CD8-positive, alpha-beta T cell (primary cell): ENCODE measurements at regions of chr16 and their contacts with region 1.

Region 1: GRCh38 chr16:89171463-89172170 is at the start of gene CDH15:
- DNase-seq: peak; percentile 83 to 98 (median 91)
- ATAC-seq: peak; percentile 96
- H3K4me3 ChIP-seq: peak within 1 kb of the TSS; percentile 35 to 50
- H3K4me3 Mint-ChIP-seq: peak within 1 kb of the TSS; percentile 69
- H3K27ac ChIP-seq: no peak within 1 kb of the TSS
- H3K27ac Mint-ChIP-seq: no peak within 1 kb of the TSS
- H3K4me1 ChIP-seq: peaks cover 29% of the 10 kb centered on the region
- H3K4me1 Mint-ChIP-seq: peaks cover 6% of the 10 kb centered on the region
- H3K27me3 ChIP-seq: peaks cover 0 to 2% of the 10 kb centered on the region in 2 experiments
- H3K27me3 Mint-ChIP-seq: no peaks in the 10 kb centered on the region
- CTCF ChIP-seq: no peak
- total RNA-seq, gene CDH15: 0.24 TPM in 1 of 2 experiments, not detected in the other

Region 2: DNA sequence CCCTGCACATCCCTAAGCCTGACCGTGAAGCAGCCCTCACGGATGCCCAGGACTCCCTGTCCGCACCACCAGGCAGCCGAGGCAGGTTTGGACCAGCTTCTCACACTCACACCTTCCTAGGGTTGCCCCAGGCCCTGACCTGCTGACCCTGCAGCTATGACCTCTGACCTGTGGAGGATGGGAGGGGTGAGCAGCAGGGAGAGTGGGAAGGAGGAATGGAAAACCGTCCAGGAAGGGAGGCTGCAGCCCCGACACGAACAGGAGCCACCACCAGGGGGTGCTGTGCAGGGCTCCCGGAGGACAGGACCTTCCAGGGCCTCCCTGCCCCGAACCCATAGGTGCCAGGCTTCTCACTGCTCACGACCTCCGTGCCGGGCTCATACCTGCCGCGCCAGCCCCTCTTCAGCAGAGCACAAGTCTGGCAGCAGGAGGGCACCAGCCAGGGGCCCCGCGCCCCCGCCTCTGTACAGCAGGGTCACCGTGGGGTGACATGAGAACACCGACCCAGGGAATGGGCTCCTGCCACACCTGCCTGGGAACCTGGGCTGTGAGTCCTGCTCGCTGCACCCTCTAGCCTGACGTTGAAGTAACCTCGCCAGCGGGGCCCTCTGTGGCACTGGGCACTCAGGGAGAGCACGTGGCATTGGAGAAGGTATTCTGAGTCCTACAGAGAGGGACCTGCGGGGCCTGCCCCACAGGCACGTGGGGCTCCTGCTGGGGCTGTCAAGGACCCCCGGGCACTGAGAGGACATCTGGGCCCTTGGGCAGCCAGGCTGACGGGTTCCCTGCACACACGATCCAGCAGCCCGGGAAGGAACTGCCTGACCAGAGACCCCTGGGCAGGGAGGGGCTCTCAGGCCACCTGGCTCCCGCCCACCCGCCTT is 427.7 kb before region 1 on chr16:
- CTCF ChIA-PET with region 1: interaction called, 3 read pairs
- POLR2A ChIA-PET with region 1: no interaction called
- intact Hi-C with region 1: loop called in 1 of 2 experiments (anchors 1 kb)
- DNase-seq: peak; percentile 43 to 88 (median 77)
- ATAC-seq: peak; percentile 64
- H3K4me3 ChIP-seq: no peak overlapping the region
- H3K4me3 Mint-ChIP-seq: no peak overlapping the region
- H3K27ac ChIP-seq: no peak overlapping the region
- H3K27ac Mint-ChIP-seq: no peak overlapping the region
- H3K4me1 ChIP-seq: peaks cover 33% of the 10 kb centered on the region
- H3K4me1 Mint-ChIP-seq: peaks cover 25% of the 10 kb centered on the region
- H3K27me3 ChIP-seq: no peaks in the 10 kb centered on the region
- H3K27me3 Mint-ChIP-seq: no peaks in the 10 kb centered on the region
- CTCF ChIP-seq: peak; percentile 89

Region 3: DNA sequence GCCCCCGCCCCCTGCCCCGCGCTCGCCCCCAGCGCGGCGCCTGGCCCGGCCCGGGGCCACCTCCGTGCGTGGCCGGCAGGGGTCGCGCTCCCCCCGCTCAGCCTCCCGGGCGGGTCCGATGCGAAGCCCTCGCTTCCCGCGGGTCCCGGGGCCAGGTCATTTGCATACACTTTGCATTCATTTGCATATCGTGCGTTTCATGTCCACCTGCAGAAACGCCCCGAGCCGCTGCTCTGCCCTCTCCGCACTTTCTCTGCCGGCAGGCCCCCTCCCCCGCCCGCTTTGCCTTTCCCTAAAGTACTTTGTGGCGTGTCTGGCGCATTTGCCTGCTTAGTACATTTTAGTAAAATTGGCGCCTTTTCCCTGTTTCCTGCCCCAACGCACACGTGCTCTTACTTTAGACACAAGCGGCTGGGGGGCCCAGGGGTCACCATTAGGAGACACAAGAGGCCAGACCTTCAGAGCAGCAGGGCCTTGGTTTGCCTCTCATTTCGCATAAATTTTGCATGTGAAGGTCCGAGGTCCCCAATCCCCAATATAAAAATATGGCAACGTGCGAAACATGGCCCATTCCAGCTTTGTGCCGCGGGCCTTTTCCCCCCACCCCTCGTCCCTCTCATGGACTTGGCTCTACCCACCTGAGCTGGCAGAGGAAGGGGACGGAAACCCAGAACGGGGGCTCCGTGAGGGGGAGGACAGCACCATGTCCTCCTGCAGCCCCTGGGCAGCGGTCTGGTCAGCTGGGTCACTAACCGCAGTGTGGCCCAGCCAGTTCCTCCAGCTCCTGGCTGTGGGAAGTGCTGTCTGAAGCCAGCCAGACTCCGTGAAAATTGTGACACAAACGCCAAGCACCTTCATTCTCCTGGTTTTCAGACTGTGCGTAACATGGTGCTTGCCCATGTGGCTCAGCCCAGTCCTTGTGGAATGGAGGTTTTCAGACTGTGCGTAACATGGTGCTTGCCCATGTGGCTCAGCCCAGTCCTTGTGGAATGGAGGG is 229.4 kb before region 1 on chr16:
- CTCF ChIA-PET with region 1: interaction called, 40 read pairs
- POLR2A ChIA-PET with region 1: interaction called, 3 read pairs
- intact Hi-C with region 1: loop called (anchors 1 kb)
- DNase-seq: peak; percentile 26 to 77 (median 59)
- ATAC-seq: peak; percentile 76
- H3K4me3 ChIP-seq: no peak overlapping the region
- H3K4me3 Mint-ChIP-seq: peak overlapping the region; percentile 54
- H3K27ac ChIP-seq: no peak overlapping the region
- H3K27ac Mint-ChIP-seq: no peak overlapping the region
- H3K4me1 ChIP-seq: peaks cover 21% of the 10 kb centered on the region
- H3K4me1 Mint-ChIP-seq: peaks cover 11% of the 10 kb centered on the region
- H3K27me3 ChIP-seq: peaks cover 18 to 28% of the 10 kb centered on the region in 2 experiments
- H3K27me3 Mint-ChIP-seq: peaks cover 34% of the 10 kb centered on the region
- CTCF ChIP-seq: peak; percentile 78

Region 4: DNA sequence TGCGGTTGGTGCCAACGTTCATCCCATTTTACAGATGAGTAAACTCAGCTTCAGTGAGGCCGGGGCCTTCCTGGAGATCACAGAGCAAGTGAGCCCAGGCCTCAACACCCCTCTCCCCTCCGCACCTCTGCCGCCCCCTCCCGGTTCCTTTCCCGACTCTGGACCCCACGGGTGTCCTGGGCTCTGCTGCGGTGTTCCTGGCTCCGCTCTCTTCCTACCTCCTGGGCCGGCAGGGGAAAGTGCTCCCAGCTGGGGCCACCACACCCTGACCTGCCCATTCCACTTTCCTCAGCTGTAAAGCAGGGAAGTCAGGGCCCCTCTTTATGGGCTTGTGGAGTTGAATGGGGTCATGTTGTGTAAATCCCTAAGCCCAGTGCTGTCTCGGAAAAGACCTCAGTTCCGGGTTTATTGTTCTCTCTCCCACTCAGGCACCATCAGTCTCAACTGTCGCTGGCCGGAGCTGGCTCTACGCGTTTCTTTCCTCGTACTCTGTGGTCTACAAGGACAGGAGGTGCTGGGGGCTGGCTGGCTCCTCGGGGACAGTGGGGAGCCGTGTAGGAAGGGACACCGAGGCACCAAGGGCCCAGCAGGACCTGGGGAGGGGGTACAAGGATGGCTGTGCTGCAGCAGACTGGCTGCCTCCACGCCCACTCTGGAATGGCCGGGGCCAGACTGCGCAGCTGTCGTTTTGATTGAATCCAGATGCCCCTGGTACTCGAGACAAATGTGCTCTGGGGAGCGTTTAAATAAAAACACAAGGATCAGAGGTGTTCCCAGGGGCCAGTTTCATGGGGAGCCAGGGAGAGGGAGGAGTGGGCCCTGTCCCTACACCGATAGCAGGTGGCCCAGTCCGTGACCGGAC is 99.7 kb before region 1 on chr16:
- CTCF ChIA-PET with region 1: no interaction called
- POLR2A ChIA-PET with region 1: no interaction called
- intact Hi-C with region 1: no loop called
- DNase-seq: no peak
- ATAC-seq: no peak
- H3K4me3 ChIP-seq: no peak overlapping the region
- H3K4me3 Mint-ChIP-seq: no peak overlapping the region
- H3K27ac ChIP-seq: no peak overlapping the region
- H3K27ac Mint-ChIP-seq: no peak overlapping the region
- H3K4me1 ChIP-seq: no peaks in the 10 kb centered on the region
- H3K4me1 Mint-ChIP-seq: no peaks in the 10 kb centered on the region
- H3K27me3 ChIP-seq: no peaks in the 10 kb centered on the region
- H3K27me3 Mint-ChIP-seq: no peaks in the 10 kb centered on the region
- CTCF ChIP-seq: no peak

Region 5: DNA sequence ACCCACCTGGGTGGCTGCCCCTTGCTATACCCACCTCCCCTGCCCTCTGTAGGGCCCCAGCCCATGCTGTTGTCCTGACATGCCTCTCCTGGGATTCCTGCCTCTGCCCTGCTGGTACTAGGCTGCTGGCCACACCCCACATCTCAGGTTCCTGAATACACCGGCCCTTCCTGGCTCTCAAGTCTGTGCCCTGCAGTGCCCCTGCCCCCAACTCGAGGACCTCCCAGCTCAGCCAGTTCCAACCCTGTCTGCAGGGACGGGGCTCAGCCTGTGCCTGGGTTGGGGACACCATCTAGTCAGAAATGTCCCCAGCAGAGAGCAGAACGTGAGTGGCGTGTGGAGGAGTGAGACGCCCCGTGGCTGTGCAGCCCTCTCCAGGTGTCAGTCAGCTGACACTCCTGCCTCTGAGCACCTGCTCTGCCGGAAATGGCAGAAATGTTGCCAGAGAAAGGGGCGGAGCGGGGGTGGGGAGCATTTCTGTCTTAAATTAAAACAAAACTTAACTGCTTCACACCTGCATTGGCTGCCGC is 49.2 kb before region 1 on chr16:
- CTCF ChIA-PET with region 1: no interaction called
- POLR2A ChIA-PET with region 1: no interaction called
- intact Hi-C with region 1: loop called in 1 of 2 experiments (anchors 1 kb)
- DNase-seq: peak; percentile 43 to 90 (median 76)
- ATAC-seq: peak; percentile 97
- H3K4me3 ChIP-seq: peak overlapping the region in 1 of 2 experiments; percentile 32
- H3K4me3 Mint-ChIP-seq: peak overlapping the region; percentile 53
- H3K27ac ChIP-seq: peak overlapping the region in 1 of 2 experiments; percentile 21
- H3K27ac Mint-ChIP-seq: peak overlapping the region; percentile 94
- H3K4me1 ChIP-seq: peaks cover 27% of the 10 kb centered on the region
- H3K4me1 Mint-ChIP-seq: peaks cover 33% of the 10 kb centered on the region
- H3K27me3 ChIP-seq: no peaks in the 10 kb centered on the region
- H3K27me3 Mint-ChIP-seq: no peaks in the 10 kb centered on the region
- CTCF ChIP-seq: no peak

Region 6: DNA sequence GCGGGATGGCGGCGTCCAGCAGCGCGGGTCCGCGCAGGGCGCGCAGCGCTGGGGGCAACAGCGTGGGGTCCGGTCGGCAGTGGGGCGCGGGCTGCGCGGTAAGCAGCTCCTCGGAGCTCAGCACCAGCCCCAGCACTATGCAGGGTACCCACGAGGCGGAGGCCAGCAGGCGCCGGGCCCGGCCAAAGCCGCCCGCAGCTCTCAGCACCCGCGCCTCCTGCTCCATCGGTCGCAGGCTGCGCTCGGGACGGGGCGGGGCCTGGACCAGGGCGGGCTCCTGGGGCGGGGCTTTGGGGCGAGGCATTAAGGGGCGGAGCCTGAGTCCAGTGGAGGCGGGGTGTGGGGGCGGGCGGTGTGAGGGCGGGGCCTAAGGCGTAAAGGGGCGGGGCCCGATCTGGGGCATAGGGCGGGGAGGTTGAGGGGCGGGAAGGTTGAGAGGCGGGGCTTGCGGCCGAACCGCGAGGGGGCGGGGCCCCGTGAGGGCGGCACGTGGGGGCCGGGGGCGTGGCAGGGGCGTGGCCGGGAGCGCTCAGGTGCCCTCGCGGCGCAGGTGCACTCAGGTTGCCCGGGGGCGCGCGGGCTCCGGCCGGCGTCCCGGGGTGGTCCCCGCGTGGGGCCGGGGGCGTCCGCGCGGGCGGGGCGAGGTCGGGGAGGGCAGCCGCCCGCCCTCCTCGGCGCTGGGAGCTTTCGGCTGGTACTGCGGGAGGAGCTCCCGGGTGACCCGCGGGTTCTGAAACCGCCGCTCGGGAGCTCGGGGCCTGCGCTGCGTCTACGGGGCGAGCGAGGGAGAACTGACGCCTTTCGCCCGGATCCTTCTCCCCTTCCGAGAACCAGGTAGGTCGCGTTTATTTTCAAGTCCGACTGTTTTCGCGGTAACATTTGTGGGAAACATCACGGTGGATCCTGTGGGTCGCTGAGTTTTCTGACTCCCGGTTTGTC is 30.1 kb after region 1 on chr16:
- CTCF ChIA-PET with region 1: no interaction called
- POLR2A ChIA-PET with region 1: no interaction called
- intact Hi-C with region 1: loop called (anchors 1 kb)
- DNase-seq: peak; percentile 55 to 84 (median 73)
- ATAC-seq: peak; percentile 93
- H3K4me3 ChIP-seq: peak overlapping the region in 1 of 2 experiments; percentile 6
- H3K4me3 Mint-ChIP-seq: peak overlapping the region; percentile 55
- H3K27ac ChIP-seq: no peak overlapping the region
- H3K27ac Mint-ChIP-seq: no peak overlapping the region
- H3K4me1 ChIP-seq: peaks cover 7% of the 10 kb centered on the region
- H3K4me1 Mint-ChIP-seq: peaks cover 14% of the 10 kb centered on the region
- H3K27me3 ChIP-seq: peaks cover 11 to 24% of the 10 kb centered on the region in 2 experiments
- H3K27me3 Mint-ChIP-seq: peaks cover 51% of the 10 kb centered on the region
- CTCF ChIP-seq: no peak

Region 7: DNA sequence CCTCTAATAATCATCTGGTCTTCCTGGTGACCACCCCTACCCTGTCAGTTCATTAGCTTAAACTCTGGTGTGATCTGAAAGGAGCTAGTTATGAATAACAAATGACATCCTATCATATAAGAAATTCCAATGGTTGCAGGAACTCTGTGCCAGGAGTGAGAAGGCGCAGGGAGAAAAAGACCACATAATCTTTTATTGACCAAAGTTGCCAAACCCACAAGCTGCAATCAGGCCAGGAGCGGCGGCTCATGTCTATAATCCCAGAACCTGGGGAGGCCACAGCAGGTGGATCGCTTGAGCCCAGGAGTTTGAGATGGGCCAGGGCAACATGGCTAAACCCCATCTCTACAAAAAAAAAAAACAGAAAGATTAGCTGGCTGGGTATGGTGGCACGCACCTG is 295.3 kb after region 1 on chr16:
- CTCF ChIA-PET with region 1: no interaction called
- POLR2A ChIA-PET with region 1: no interaction called
- intact Hi-C with region 1: no loop called
- DNase-seq: no peak
- ATAC-seq: no peak
- H3K4me3 ChIP-seq: no peak overlapping the region
- H3K4me3 Mint-ChIP-seq: peak overlapping the region; percentile 32
- H3K27ac ChIP-seq: no peak overlapping the region
- H3K27ac Mint-ChIP-seq: no peak overlapping the region
- H3K4me1 ChIP-seq: peaks cover 48% of the 10 kb centered on the region
- H3K4me1 Mint-ChIP-seq: peaks cover 72% of the 10 kb centered on the region
- H3K27me3 ChIP-seq: no peaks in the 10 kb centered on the region
- H3K27me3 Mint-ChIP-seq: no peaks in the 10 kb centered on the region
- CTCF ChIP-seq: no peak

Region 8: DNA sequence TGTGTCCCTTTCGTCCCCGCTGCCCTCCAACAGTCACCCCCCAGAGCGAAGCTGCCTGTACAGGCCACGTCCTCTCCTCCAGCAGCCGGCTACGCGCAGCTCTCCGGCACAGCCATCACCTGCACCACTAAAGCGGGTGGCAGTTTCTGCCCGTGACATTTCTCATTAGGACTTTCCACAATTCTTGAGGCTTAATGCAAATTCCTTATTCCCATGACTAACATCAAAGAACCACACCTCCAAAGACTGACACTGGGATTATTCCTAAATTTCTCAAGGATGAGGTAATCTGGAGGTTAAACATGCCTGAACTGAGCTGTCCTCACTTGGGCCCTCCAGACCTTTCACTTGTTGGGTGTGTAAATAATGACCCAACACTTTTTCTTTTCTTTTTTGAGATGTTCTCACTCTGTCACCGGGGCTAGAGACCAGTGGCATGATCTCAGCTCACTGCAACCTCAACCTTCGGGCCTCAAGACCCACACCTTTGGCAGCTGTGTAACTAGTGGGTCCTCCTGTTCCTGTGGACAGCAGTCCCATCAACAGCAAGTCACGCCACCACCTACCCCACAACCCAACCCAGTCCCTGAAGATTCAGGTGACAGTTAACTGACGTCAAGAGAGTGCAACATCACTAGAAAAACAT is 307.1 kb after region 1 on chr16:
- CTCF ChIA-PET with region 1: no interaction called
- POLR2A ChIA-PET with region 1: no interaction called
- intact Hi-C with region 1: no loop called
- DNase-seq: peak in 4 of 9 experiments; percentile 25 to 54 (median 34)
- ATAC-seq: peak; percentile 34
- H3K4me3 ChIP-seq: peak overlapping the region in 1 of 2 experiments; percentile 18
- H3K4me3 Mint-ChIP-seq: peak overlapping the region; percentile 81
- H3K27ac ChIP-seq: peak overlapping the region; percentile 5 to 7
- H3K27ac Mint-ChIP-seq: peak overlapping the region; percentile 86
- H3K4me1 ChIP-seq: peaks cover 91% of the 10 kb centered on the region
- H3K4me1 Mint-ChIP-seq: peaks cover 88% of the 10 kb centered on the region
- H3K27me3 ChIP-seq: no peaks in the 10 kb centered on the region
- H3K27me3 Mint-ChIP-seq: no peaks in the 10 kb centered on the region
- CTCF ChIP-seq: no peak